Left ventricle myocardium inferior (tissue), 1 donor: ENCODE measurements at regions of chr12 and their contacts with region 1.

Region 1: GRCh38 chr12:114476159-114476558 is 70.2 kb upstream of the TBX5 start:
- DNase-seq: no peak
- H3K4me3 ChIP-seq: no peak overlapping the region
- H3K27ac ChIP-seq: no peak overlapping the region
- H3K4me1 ChIP-seq: peaks cover 14% of the 10 kb centered on the region
- H3K27me3 ChIP-seq: peaks cover 58% of the 10 kb centered on the region
- CTCF ChIP-seq: peak; percentile 73

Region 2: GRCh38 chr12:114166362-114166761 is 309.8 kb before region 1 on chr12:
- intact Hi-C with region 1: loop called (anchors 10 kb)
- DNase-seq: no peak
- H3K4me3 ChIP-seq: no peak overlapping the region
- H3K27ac ChIP-seq: no peak overlapping the region
- H3K4me1 ChIP-seq: peaks cover 4% of the 10 kb centered on the region
- H3K27me3 ChIP-seq: peaks cover 19% of the 10 kb centered on the region
- CTCF ChIP-seq: peak; percentile 77

Region 3: DNA sequence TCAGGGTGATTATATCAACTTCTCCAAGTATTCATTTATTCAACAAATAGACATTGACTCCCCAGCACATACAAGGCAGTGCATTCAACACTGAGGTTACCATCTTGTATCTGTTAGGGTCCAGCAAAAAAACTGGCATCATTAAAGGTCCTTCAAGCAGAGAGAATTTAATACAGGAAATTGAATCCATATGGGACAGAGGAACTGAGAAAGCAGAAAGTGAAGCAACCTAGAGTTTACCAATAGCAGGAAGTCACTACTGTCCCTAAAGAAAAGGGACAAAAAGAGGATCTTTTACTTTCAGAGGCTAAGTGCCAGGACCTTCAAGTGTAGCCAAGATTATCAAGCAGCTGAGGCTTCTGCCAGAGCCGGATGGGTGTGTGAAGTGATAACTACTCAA is 445.6 kb after region 1 on chr12:
- intact Hi-C with region 1: no loop called
- DNase-seq: no peak
- H3K4me3 ChIP-seq: no peak overlapping the region
- H3K27ac ChIP-seq: peak overlapping the region; percentile 55
- H3K4me1 ChIP-seq: peaks cover 23% of the 10 kb centered on the region
- H3K27me3 ChIP-seq: no peaks in the 10 kb centered on the region
- CTCF ChIP-seq: no peak